Mucosa of descending colon (tissue), 3 donors: ENCODE measurements at regions of chr2 and their contacts with region 1.

Region 1: DNA sequence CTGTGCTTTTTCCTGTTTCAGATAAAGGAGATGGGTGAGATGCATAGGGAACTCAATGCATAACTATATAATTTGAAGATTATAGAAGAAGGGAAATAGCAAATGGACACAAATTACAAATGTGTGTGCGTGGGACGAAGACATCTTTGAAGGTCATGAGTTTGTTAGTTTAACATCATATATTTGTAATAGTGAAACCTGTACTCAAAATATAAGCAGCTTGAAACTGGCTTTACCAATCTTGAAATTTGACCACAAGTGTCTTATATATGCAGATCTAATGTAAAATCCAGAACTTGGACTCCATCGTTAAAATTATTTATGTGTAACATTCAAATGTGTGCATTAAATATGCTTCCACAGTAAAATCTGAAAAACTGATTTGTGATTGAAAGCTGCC is 16.4 kb upstream of the MSH2 start:
- DNase-seq: no peak
- ATAC-seq: no peak
- H3K4me3 ChIP-seq: no peak overlapping the region
- H3K4me1 ChIP-seq: peaks cover 6% of the 10 kb centered on the region
- CTCF ChIP-seq: no peak

Region 2: GRCh38 chr2:47334356-47335136 is 52.0 kb before region 1 on chr2:
- intact Hi-C with region 1: loop called (anchors 5 kb)
- DNase-seq: no peak
- ATAC-seq: no peak
- H3K4me3 ChIP-seq: no peak overlapping the region
- H3K4me1 ChIP-seq: peaks cover 5% of the 10 kb centered on the region
- CTCF ChIP-seq: no peak

Region 3: DNA sequence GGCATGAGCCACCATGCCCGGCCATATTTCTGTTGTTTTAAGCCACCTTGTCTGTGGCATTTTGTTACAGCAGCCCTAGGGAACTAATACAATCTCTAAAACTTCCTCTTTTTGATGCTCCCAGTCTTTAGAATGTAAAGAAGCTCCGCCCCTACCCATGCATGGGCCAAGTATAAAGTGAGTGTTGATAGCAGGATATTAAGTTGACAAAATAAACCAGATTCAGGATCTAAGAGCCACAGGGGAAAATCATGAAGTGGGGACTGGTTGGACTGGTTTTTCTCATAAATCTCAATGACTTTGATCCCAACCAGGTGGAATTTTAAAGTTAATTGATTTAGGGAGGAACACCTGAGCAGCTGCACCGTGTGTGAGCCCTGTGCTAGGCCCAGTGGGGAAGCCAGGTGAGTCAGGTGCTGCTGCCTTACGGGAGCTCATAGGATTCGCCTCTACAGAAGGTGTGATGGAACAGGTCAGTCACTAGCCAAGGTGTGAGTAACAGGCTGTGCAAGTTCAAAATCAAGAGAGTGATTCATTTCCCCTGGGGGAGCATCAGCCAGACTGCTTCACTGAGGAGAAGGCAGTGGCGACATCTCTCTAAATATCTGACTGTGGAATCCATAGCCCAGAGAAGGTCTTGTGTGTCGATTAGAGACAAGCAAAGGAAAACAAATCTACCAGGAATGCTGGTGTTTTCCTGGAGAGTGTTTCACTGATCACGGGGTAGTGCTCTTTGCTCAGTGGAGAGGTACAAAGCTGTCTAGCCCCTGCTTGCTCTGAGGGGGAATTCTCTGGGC is 46.6 kb before region 1 on chr2:
- intact Hi-C with region 1: loop called in 1 of 2 experiments (anchors 5 kb)
- DNase-seq: peak; percentile 62 to 79 (median 69)
- ATAC-seq: peak; percentile 75
- H3K4me3 ChIP-seq: no peak overlapping the region
- H3K4me1 ChIP-seq: peaks cover 26% of the 10 kb centered on the region
- CTCF ChIP-seq: no peak